Activated B cell treated with CpG ODN at 0.5 μM for 24 hours (primary cell): ENCODE measurements at regions of chr14 and their contacts with region 1.

Region 1: GRCh38 chr14:57293866-57294837 is 25.4 kb downstream of the AP5M1 start:
- DNase-seq: no peak
- ATAC-seq: no peak
- H3K4me3 Mint-ChIP-seq: no peak overlapping the region
- H3K27ac Mint-ChIP-seq: no peak overlapping the region
- H3K4me1 Mint-ChIP-seq: no peaks in the 10 kb centered on the region
- H3K27me3 Mint-ChIP-seq: no peaks in the 10 kb centered on the region
- CTCF ChIP-seq: no peak

Region 2: DNA sequence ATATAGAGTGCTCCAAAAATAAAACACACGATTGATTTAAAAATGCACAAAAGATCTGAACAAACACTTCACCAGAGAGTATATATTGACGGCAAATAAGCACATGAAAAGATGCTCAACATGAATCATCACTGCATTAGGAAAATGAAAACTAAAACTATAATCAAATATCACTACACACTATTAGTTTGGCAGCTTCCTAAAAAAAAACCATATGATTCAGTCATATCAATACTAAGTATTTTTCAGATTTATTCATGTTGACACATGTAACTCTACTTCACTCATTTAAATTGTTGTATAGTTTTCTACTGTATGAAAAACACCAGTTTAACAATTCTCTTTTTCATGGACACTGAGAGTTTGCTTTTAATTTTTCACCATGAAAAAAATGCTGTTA is 67.1 kb before region 1 on chr14:
- CTCF ChIA-PET with region 1: no interaction called
- POLR2A ChIA-PET with region 1: no interaction called
- intact Hi-C with region 1: loop called (anchors 5 kb)
- DNase-seq: no peak
- ATAC-seq: no peak
- H3K4me3 Mint-ChIP-seq: no peak overlapping the region
- H3K27ac Mint-ChIP-seq: no peak overlapping the region
- H3K4me1 Mint-ChIP-seq: no peaks in the 10 kb centered on the region
- H3K27me3 Mint-ChIP-seq: no peaks in the 10 kb centered on the region
- CTCF ChIP-seq: no peak